Psoas muscle (tissue), 8 donors: ENCODE measurements at regions of chr4 and their contacts with region 1.

Region 1: DNA sequence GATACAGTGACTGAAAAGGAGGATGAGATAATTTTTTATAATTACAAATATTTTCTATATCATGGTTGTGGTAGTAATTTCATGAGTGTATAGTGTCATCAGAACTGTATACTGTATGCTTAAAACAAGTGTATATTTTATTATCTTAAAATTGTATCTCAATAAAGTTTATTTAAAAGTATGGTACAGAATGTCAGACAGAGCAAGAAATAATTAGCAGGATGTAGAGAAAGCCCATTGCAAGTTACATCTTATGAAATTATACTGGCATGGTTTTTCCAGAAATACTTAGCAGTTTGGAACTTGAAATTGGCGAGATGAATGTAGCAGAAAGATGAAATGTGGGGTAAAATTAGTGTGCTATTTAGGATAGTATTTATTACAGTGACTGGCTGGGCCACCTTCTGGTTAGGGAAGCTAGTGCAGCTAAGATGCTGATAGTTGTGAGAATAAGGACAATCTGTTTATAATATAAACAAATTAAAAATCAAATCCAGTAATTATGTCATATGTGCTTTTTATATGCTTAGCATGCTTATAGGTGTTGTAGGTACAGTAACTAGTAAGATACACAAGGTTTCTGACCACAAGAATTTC is 74.7 kb downstream of the IL15 start:
- DNase-seq: no peak
- ATAC-seq: no peak
- H3K4me3 ChIP-seq: no peak overlapping the region
- H3K27ac ChIP-seq: no peak overlapping the region
- H3K4me1 ChIP-seq: peaks cover 7% of the 10 kb centered on the region
- H3K27me3 ChIP-seq: no peaks in the 10 kb centered on the region
- CTCF ChIP-seq: peak; percentile 63

Region 2: DNA sequence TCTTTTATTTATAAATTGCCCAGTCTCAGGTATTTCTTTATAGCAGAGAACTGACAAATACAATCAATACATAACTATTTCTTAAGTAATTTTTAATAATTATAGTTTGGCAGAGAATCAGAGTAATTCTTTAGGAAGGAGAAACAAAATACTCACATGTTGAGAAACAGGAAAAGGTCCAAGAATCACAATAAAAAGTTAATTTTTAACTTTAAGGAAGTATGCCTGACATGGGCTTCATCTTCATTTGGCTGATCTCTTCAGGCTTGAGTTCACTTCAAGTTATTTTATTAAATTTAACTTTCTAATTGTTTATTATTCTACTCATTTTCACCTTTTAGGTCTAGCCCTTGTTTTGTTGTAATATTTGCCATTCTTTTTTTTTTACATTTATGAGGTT is 541.7 kb before region 1 on chr4:
- intact Hi-C with region 1: loop called in 1 of 2 experiments (anchors 10 kb)
- DNase-seq: no peak
- ATAC-seq: no peak
- H3K4me3 ChIP-seq: no peak overlapping the region
- H3K27ac ChIP-seq: no peak overlapping the region
- H3K4me1 ChIP-seq: no peaks in the 10 kb centered on the region
- H3K27me3 ChIP-seq: no peaks in the 10 kb centered on the region
- CTCF ChIP-seq: no peak

Region 3: GRCh38 chr4:141307241-141307689 is 403.8 kb before region 1 on chr4:
- intact Hi-C with region 1: loop called in 1 of 2 experiments (anchors 10 kb)
- DNase-seq: peak; percentile 48 to 68
- ATAC-seq: peak; percentile 99 to 100 (median 100)
- H3K4me3 ChIP-seq: no peak overlapping the region
- H3K27ac ChIP-seq: peak overlapping the region; percentile 38
- H3K4me1 ChIP-seq: no peaks in the 10 kb centered on the region
- H3K27me3 ChIP-seq: no peaks in the 10 kb centered on the region
- CTCF ChIP-seq: peak; percentile 81

Region 4: DNA sequence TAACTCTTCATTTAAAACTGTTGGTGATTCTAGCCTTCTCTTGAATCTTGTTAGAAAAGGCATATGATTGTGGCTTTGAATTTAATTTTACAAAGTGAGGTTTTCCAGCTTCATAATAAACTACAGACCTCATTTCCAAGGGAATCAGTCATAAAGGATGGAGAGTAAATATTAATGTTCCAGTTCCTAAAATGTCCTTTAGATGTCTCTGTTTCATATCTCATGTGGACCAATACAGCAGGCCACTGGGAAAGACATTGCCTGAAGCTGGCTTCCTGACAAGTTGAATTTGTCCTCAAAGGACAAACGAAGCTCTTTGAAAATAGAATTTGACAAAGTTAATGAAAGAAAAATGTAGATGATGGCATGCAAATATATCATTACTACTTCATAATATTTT is 365.0 kb before region 1 on chr4:
- intact Hi-C with region 1: loop called (anchors 5 to 10 kb)
- DNase-seq: no peak
- ATAC-seq: peak; percentile 66 to 87 (median 77)
- H3K4me3 ChIP-seq: no peak overlapping the region
- H3K27ac ChIP-seq: no peak overlapping the region
- H3K4me1 ChIP-seq: no peaks in the 10 kb centered on the region
- H3K27me3 ChIP-seq: no peaks in the 10 kb centered on the region
- CTCF ChIP-seq: peak; percentile 67

Region 5: DNA sequence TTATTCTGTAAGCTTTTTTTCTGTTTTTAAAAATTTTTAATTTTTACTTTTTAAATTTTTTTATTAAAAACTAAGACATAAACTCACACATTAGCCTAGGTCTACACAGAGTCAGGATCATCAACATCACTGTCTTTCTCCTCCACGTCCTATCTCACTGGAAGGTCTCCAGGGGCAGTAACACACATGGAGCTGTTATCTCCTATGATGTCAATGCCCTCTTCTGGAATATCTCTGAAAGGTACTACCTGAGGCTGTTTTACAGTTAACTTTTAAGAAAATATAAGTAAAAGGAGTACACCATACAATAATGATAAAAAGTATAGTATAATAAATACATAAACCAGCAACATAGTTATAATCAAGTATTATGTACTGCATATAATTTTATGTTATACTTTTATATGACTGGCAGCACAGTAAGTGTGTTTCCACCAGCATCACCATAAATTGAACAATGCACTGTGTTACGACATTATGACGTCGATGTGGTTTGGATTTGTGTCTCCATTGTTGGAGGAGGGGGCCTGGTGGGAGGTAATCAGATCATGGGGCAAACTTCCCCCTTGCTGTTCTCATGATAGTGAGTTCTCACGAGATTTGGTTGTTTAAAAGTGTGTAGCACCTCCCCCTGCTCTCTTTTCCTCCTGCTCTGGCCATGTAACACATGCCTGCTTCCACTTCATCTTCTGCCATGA is 53.4 kb before region 1 on chr4:
- intact Hi-C with region 1: no loop called
- DNase-seq: no peak
- ATAC-seq: no peak
- H3K4me3 ChIP-seq: no peak overlapping the region
- H3K27ac ChIP-seq: no peak overlapping the region
- H3K4me1 ChIP-seq: no peaks in the 10 kb centered on the region
- H3K27me3 ChIP-seq: no peaks in the 10 kb centered on the region
- CTCF ChIP-seq: no peak